B cell (primary cell): ENCODE measurements at regions of chr11 and their contacts with region 1.

Region 1: GRCh38 chr11:6531267-6531752 is 34.2 kb downstream of the DNHD1 start:
- DNase-seq: peak; percentile 66
- ATAC-seq: peak; percentile 57
- H3K4me3 ChIP-seq: no peak overlapping the region
- H3K4me3 Mint-ChIP-seq: no peak overlapping the region
- H3K27ac ChIP-seq: no peak overlapping the region
- H3K27ac Mint-ChIP-seq: no peak overlapping the region
- H3K4me1 ChIP-seq: peaks cover 4 to 5% of the 10 kb centered on the region in 2 donors
- H3K4me1 Mint-ChIP-seq: peaks cover 5% of the 10 kb centered on the region
- H3K27me3 ChIP-seq: no peaks in the 10 kb centered on the region
- H3K27me3 Mint-ChIP-seq: no peaks in the 10 kb centered on the region
- CTCF ChIP-seq: peak; percentile 83

Region 2: GRCh38 chr11:6427516-6427915 is 103.8 kb before region 1 on chr11:
- CTCF ChIA-PET with region 1: no interaction called
- POLR2A ChIA-PET with region 1: no interaction called
- intact Hi-C with region 1: no loop called
- DNase-seq: no peak
- ATAC-seq: no peak
- H3K4me3 ChIP-seq: no peak overlapping the region
- H3K4me3 Mint-ChIP-seq: no peak overlapping the region
- H3K27ac ChIP-seq: no peak overlapping the region
- H3K27ac Mint-ChIP-seq: no peak overlapping the region
- H3K4me1 ChIP-seq: no peaks in the 10 kb centered on the region
- H3K4me1 Mint-ChIP-seq: no peaks in the 10 kb centered on the region
- H3K27me3 ChIP-seq: peaks cover 0 to 11% (median 10%) of the 10 kb centered on the region in 4 experiments
- H3K27me3 Mint-ChIP-seq: peaks cover 31% of the 10 kb centered on the region
- CTCF ChIP-seq: no peak

Region 3: DNA sequence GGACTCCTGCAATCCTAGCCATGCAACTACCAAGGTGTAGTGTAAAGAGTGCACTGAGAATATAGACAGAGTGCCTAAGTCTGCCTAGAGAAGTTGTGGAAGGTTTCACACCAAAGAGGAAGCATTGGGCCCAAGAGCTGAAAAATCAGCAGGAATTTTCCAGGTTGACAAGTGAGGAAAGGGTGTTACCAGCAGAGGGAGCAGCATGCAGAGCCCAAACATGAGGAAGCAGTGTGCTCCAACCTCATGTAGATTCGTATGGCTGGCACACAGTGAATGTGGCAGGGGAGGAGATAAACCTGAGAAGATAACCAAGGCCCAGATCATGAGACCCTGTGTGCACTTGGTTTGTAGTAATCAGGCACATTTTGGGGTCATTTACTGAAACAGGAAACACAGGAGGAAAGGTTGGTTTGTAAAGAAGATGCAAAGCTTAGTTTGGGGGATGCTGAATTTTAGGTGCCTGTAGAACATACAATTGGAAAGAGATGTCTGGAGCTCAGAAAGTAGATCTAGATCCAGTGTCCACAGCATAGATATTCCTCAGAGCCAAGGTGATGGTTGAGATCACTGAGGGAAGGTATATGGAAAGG is 92.2 kb before region 1 on chr11:
- CTCF ChIA-PET with region 1: no interaction called
- POLR2A ChIA-PET with region 1: no interaction called
- intact Hi-C with region 1: no loop called
- DNase-seq: peak; percentile 22
- ATAC-seq: no peak
- H3K4me3 ChIP-seq: no peak overlapping the region
- H3K4me3 Mint-ChIP-seq: no peak overlapping the region
- H3K27ac ChIP-seq: no peak overlapping the region
- H3K27ac Mint-ChIP-seq: no peak overlapping the region
- H3K4me1 ChIP-seq: peaks cover 13 to 24% of the 10 kb centered on the region in 2 donors
- H3K4me1 Mint-ChIP-seq: peaks cover 7% of the 10 kb centered on the region
- H3K27me3 ChIP-seq: no peaks in the 10 kb centered on the region
- H3K27me3 Mint-ChIP-seq: no peaks in the 10 kb centered on the region
- CTCF ChIP-seq: no peak

Region 4: GRCh38 chr11:6619004-6619745 is 87.9 kb after region 1 on chr11 and contains the start of gene TPP1:
- CTCF ChIA-PET with region 1: interaction called, 19 read pairs
- POLR2A ChIA-PET with region 1: no interaction called
- intact Hi-C with region 1: no loop called
- DNase-seq: peak; percentile 97
- ATAC-seq: peak; percentile 92
- H3K4me3 ChIP-seq: peak within 1 kb of the TSS; percentile 82 to 100 (median 96)
- H3K4me3 Mint-ChIP-seq: no peak within 1 kb of the TSS
- H3K27ac ChIP-seq: peak within 1 kb of the TSS; percentile 94 to 97
- H3K27ac Mint-ChIP-seq: no peak within 1 kb of the TSS
- H3K4me1 ChIP-seq: peaks cover 19 to 33% of the 10 kb centered on the region in 2 donors
- H3K4me1 Mint-ChIP-seq: peaks cover 11% of the 10 kb centered on the region
- H3K27me3 ChIP-seq: no peaks in the 10 kb centered on the region
- H3K27me3 Mint-ChIP-seq: no peaks in the 10 kb centered on the region
- CTCF ChIP-seq: no peak
- total RNA-seq, gene TPP1: 191 and 200 TPM in 2 replicates

Region 5: DNA sequence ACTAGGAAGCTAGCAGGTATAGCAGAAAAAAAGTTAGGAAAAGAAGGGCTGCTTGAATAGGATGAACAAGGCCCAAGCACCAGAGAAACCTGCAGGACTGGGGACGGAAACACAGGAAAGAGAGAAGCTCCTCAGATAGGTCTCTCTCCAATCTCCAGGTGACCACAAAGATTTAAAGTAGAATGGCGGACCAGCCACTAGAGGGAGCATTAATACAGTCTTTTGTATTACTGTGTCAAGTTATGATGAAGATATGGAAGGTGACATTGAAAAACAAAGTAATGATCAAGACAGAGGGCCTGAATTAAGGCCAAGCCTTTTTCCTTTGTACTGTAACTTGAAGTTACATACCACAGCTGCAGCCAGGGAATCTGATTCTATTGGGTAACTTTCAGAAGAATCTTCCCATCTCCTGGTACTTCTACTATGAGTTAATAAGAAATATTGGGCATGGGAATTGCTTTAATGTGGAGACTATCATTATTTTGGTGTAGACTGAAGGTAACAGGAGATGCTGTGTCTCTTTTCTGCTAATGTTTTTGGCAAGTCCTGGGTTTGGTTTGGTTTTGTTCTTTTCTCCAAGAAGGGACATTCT is 206.7 kb after region 1 on chr11:
- CTCF ChIA-PET with region 1: interaction called, 12 read pairs
- POLR2A ChIA-PET with region 1: no interaction called
- intact Hi-C with region 1: no loop called
- DNase-seq: peak; percentile 82
- ATAC-seq: peak; percentile 86
- H3K4me3 ChIP-seq: no peak overlapping the region
- H3K4me3 Mint-ChIP-seq: no peak overlapping the region
- H3K27ac ChIP-seq: peak overlapping the region in 1 of 2 donors; percentile 68
- H3K27ac Mint-ChIP-seq: peak overlapping the region; percentile 39
- H3K4me1 ChIP-seq: peaks cover 49 to 60% of the 10 kb centered on the region in 2 donors
- H3K4me1 Mint-ChIP-seq: peaks cover 77% of the 10 kb centered on the region
- H3K27me3 ChIP-seq: no peaks in the 10 kb centered on the region
- H3K27me3 Mint-ChIP-seq: no peaks in the 10 kb centered on the region
- CTCF ChIP-seq: peak; percentile 79